HCT116 (cell line): ENCODE measurements at regions of chr17 and their contacts with region 1.

Region 1: GRCh38 chr17:68682903-68683302 is 81.7 kb upstream of the FAM20A start:
- DNase-seq: no peak
- ATAC-seq: no peak
- H3K4me3 ChIP-seq: no peak overlapping the region
- H3K27ac ChIP-seq: no peak overlapping the region
- H3K4me1 ChIP-seq: no peaks in the 10 kb centered on the region
- H3K27me3 ChIP-seq: peaks cover 4% of the 10 kb centered on the region; the same call in 1 of the 2 replicates
- CTCF ChIP-seq: no peak
- POLR2A ChIP-seq: no peak
- RAD21 ChIP-seq: no peak

Region 2: DNA sequence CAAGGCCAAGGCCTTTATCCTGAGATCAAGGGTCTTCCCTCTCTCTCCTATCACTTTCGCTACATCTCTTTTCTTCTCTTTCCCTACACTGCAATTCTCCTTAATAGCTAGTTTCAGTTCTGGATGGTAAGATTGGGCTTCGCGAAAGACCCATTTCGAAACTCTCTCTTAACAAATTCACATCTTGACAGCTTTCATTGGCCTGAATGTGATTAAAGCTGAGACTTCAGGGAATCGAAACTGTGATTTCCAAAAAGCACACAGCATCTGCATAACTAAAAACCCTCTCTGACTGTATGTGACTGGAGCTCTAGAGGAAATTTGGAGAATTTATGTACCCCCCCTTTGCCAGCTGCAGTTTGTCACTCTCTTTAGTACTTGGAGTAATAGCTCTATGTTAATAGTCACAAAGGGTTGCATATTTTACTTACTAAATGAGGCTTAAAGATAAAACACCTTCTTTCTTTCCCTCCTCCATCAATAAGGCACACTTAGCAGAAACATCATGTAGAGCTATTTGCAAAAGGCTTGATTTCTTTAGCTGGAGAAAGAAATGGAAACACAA is 23.5 kb after region 1 on chr17:
- CTCF ChIA-PET with region 1: no interaction called
- POLR2A ChIA-PET with region 1: no interaction called
- RAD21 ChIA-PET with region 1: no interaction called
- intact Hi-C with region 1: loop called (anchors 1 kb)
- DNase-seq: no peak
- ATAC-seq: no peak
- H3K4me3 ChIP-seq: no peak overlapping the region
- H3K27ac ChIP-seq: no peak overlapping the region
- H3K4me1 ChIP-seq: peaks cover 0 to 5% of the 10 kb centered on the region in 2 experiments; a peak in 1 of 4 replicates
- H3K27me3 ChIP-seq: no peaks in the 10 kb centered on the region
- CTCF ChIP-seq: no peak
- POLR2A ChIP-seq: no peak
- RAD21 ChIP-seq: no peak

Region 3: GRCh38 chr17:69551212-69552010 is 868.5 kb after region 1 on chr17:
- CTCF ChIA-PET with region 1: no interaction called
- POLR2A ChIA-PET with region 1: no interaction called
- RAD21 ChIA-PET with region 1: no interaction called
- intact Hi-C with region 1: no loop called
- DNase-seq: no peak
- ATAC-seq: no peak
- H3K4me3 ChIP-seq: no peak overlapping the region
- H3K27ac ChIP-seq: no peak overlapping the region
- H3K4me1 ChIP-seq: no peaks in the 10 kb centered on the region
- H3K27me3 ChIP-seq: no peaks in the 10 kb centered on the region
- CTCF ChIP-seq: no peak
- POLR2A ChIP-seq: no peak
- RAD21 ChIP-seq: no peak